Upper lobe of right lung (tissue), 1 donor: ENCODE measurements at regions of chr20 and their contacts with region 1.

Region 1: DNA sequence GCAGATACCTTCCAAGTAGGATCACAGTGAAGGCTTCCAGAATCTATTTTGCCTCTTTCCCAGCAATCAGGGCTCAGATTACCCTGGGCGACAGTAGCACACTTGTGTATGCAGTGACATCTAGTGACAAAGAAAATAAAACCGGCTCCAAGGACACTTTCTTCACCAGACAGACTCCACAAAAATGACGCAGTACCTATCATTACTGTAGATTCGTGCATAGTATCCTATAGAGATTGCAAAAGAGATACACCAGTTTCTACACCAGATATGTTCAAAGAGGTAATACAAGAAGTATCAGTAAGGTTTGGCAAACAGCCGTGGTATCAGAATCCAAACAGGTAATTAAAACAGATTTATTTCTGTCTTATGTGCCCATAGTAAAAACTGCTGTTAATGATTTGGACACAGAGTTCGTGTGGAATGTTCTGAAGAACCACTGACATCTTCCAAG is 600.4 kb upstream of the JAG1 start:
- DNase-seq: no peak
- ATAC-seq: peak; percentile 88
- H3K4me3 ChIP-seq: no peak overlapping the region
- H3K27ac ChIP-seq: no peak overlapping the region
- H3K4me1 ChIP-seq: no peaks in the 10 kb centered on the region
- H3K27me3 ChIP-seq: no peaks in the 10 kb centered on the region
- CTCF ChIP-seq: peak; percentile 65

Region 2: DNA sequence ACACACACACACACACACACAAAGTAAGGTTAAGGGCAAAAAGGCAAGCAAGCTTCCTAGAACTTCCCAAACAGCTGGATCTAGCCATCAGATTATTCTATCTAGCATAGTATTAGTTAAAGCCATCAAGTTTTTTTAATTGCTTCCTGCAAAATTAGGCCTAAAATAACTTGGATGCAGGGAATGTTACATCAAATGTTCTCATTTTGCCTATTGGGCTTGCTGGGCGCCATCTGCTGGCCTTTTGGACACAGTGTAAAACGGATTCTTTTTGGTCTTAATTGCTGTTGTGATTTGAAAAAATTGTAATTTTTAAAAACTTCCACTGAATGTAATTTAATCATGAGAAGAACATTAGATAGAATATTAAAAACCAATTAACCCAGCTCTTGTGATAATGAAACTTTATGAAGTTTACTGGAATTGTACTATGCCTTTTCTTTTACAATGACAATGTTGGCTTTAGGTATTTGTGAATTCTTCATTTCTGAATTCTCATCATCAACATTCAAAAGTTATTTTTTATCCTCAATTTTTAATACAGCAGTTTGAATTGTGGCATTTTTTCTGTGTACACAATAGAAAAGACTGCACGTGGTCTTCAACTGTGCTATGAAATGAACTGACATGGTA is 847.0 kb before region 1 on chr20:
- intact Hi-C with region 1: no loop called
- DNase-seq: no peak
- ATAC-seq: peak; percentile 49
- H3K4me3 ChIP-seq: no peak overlapping the region
- H3K27ac ChIP-seq: no peak overlapping the region
- H3K4me1 ChIP-seq: peaks cover 15% of the 10 kb centered on the region
- H3K27me3 ChIP-seq: no peaks in the 10 kb centered on the region
- CTCF ChIP-seq: peak; percentile 80

Region 3: DNA sequence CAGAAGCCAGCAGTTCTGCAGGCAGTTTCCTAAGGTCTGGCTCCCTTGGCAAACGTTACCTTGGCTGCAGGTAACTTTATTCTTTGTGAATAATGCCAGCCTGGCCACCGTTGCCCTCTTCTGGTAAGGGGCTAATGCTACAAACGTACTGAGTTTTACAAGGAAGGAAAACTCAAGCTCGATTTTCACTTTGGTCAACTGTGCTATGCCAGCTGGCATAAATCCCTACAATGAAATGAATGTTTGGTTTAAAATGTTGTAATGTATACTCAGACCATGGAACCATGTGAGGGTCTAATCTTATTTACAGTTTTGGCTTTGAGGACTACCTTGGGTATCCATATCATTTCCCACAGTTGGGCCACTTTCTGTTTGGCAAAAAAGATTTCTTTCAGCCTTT is 737.6 kb before region 1 on chr20:
- intact Hi-C with region 1: no loop called
- DNase-seq: peak; percentile 66
- ATAC-seq: peak; percentile 73
- H3K4me3 ChIP-seq: no peak overlapping the region
- H3K27ac ChIP-seq: no peak overlapping the region
- H3K4me1 ChIP-seq: peaks cover 6% of the 10 kb centered on the region
- H3K27me3 ChIP-seq: no peaks in the 10 kb centered on the region
- CTCF ChIP-seq: peak; percentile 35

Region 4: GRCh38 chr20:10673988-10674711 is 600.0 kb before region 1 on chr20 and contains the start of gene JAG1:
- intact Hi-C with region 1: loop called (anchors 5 kb)
- DNase-seq: peak; percentile 98
- ATAC-seq: peak; percentile 85
- H3K4me3 ChIP-seq: peak within 1 kb of the TSS; percentile 91
- H3K27ac ChIP-seq: peak within 1 kb of the TSS; percentile 97
- H3K4me1 ChIP-seq: peaks cover 16% of the 10 kb centered on the region
- H3K27me3 ChIP-seq: no peaks in the 10 kb centered on the region
- CTCF ChIP-seq: no peak
- total RNA-seq, gene JAG1: 51.6 TPM